Colonic mucosa (tissue), 4 donors: ENCODE measurements at regions of chr1 and their contacts with region 1.

Region 1: GRCh38 chr1:3012456-3013291 is 8.6 kb upstream of the ACTRT2 start:
- DNase-seq: peak; percentile 57
- H3K4me3 ChIP-seq: no peak overlapping the region
- H3K27ac ChIP-seq: no peak overlapping the region
- H3K4me1 ChIP-seq: no peaks in the 10 kb centered on the region
- H3K27me3 ChIP-seq: peaks cover 3% of the 10 kb centered on the region
- CTCF ChIP-seq: peak; percentile 81

Region 2: GRCh38 chr1:3283849-3284248 is 271.2 kb after region 1 on chr1:
- intact Hi-C with region 1: loop called (anchors 5 kb)
- DNase-seq: peak; percentile 28
- H3K4me3 ChIP-seq: no peak overlapping the region
- H3K27ac ChIP-seq: no peak overlapping the region
- H3K4me1 ChIP-seq: no peaks in the 10 kb centered on the region
- H3K27me3 ChIP-seq: no peaks in the 10 kb centered on the region
- CTCF ChIP-seq: peak; percentile 50

Region 3: GRCh38 chr1:3403388-3404231 is 390.9 kb after region 1 on chr1:
- intact Hi-C with region 1: loop called (anchors 5 kb)
- DNase-seq: no peak
- H3K4me3 ChIP-seq: no peak overlapping the region
- H3K27ac ChIP-seq: no peak overlapping the region
- H3K4me1 ChIP-seq: no peaks in the 10 kb centered on the region
- H3K27me3 ChIP-seq: no peaks in the 10 kb centered on the region
- CTCF ChIP-seq: no peak

Region 4: DNA sequence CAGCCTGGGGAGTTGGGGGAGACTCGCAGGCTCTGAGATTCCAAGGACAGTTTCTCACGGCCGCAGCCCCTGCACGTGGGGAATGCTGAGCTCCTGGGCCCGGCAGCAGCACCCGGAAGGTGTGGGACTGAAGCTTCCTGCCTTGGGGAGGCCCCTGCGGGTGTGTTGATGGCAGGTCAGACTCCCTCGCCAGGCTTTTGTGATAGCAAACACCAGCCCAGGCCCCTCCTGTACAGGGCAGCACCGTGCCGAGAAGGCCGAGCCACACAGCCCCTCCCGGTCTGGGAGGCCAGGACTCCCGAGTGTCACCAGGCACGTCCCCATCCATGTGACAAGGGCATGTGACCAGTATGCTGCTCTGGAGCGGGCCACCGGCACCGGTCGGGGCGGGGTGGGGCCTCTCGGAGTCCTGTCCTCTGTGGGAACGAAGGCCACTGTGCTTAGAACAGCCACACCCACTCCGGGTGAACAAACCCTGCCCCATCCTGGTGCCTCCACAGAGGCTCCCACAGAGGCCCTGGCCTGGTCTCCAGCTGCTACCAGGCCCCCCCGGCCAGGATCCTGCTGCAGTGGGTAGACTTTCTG is 410.7 kb after region 1 on chr1:
- intact Hi-C with region 1: loop called (anchors 2 kb)
- DNase-seq: peak; percentile 90
- H3K4me3 ChIP-seq: no peak overlapping the region
- H3K27ac ChIP-seq: peak overlapping the region; percentile 50
- H3K4me1 ChIP-seq: peaks cover 18% of the 10 kb centered on the region
- H3K27me3 ChIP-seq: no peaks in the 10 kb centered on the region
- CTCF ChIP-seq: no peak